ENCODE measurements at regions of chr19 and their contacts with region 1.

Region 1: DNA sequence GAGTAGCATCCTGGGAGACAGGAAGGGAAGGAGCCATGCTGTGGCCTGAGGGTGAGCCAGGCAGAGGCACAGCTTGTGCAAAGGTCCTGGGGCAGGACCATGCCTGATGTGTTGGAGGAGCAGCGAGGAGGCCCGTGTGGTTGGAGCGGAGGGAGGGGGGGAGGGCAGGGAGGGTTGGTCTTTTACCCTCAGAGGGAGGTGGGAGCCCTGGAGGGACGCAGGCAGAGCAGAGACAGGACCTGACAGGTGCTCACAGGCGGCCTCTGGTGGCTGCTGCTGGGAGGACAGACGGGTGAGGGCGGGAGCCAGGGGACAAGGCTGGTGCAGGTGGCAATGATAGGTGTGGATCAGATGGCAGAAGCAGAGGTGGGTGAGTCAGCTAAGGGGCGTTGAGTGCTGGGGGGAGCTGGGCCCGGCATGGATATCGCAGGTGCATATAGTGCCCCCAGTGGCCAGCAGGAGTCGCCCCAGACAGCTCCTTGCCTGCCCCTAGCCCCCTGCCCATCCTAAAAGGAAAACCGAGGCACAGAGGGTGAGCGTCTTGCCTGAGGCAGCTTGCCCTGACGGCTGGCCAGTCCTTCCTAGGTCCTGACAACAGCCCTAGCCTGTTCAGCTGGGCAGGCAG is 9.8 kb upstream of the GNA15 start:
- DNase-seq: peak; percentile 85 to 87
- H3K4me3 ChIP-seq: no peak overlapping the region
- H3K27ac ChIP-seq: no peak overlapping the region
- H3K4me1 ChIP-seq: no peaks in the 10 kb centered on the region
- H3K27me3 ChIP-seq: no peaks in the 10 kb centered on the region
- CTCF ChIP-seq: peak; percentile 61 to 96 (median 73)
- EP300 ChIP-seq: no peak
- POLR2A ChIP-seq: no peak
- RAD21 ChIP-seq: peak; percentile 52 to 55

Region 2: DNA sequence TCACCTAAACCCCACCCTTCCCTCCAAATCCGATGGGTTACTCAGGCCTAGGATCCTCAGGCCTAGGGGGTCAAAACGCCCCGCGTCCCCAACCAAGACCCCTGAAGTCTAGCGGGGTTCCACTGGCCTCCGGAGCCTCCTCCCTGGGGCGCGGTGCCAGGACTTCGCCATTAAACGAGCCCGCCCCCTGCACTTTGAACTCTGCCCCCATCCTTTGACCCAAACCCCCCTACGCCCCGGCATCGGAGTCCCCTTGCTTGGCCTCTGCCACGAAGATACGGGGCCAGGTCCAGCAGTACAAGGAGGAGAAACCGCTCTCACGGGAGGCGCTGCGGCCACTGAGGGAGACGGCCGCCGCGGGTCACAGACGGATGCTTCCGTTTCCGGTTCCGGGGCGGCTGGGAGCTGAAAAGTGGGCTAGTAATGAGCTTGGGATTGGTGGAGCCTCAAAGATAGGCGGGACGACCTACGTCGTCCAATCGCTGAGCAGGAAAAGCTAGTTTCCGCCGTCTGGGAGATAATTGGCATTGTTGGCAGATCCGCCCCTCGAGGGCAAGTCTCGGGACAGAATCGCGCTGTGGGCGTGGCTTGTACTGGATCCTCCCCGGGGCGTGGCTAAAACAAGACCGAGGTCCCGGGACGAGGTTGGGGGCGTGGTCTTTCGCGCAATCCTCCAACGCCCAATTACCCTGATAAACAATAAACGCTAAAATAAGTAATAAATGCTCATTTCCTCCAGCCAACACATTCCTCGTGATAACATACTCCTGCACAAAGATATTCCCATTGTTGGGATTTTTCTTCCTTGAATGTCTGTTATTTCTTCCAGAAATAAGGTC is 175.5 kb before region 1 on chr19:
- CTCF ChIA-PET with region 1: interaction called, 15 read pairs
- POLR2A ChIA-PET with region 1: no interaction called
- DNase-seq: peak; percentile 99 to 100
- H3K4me3 ChIP-seq: peak overlapping the region; percentile 73 to 98 (median 90)
- H3K27ac ChIP-seq: peak overlapping the region; percentile 74
- H3K4me1 ChIP-seq: peaks cover 0 to 6% (median 4%) of the 10 kb centered on the region in 4 experiments; a peak in 4 of 7 replicates
- H3K27me3 ChIP-seq: no peaks in the 10 kb centered on the region
- CTCF ChIP-seq: peak in 1 of 3 experiments; percentile 11; a peak in 1 of 4 replicates
- EP300 ChIP-seq: no peak
- POLR2A ChIP-seq: peak; percentile 87 to 96
- RAD21 ChIP-seq: no peak

Region 3: DNA sequence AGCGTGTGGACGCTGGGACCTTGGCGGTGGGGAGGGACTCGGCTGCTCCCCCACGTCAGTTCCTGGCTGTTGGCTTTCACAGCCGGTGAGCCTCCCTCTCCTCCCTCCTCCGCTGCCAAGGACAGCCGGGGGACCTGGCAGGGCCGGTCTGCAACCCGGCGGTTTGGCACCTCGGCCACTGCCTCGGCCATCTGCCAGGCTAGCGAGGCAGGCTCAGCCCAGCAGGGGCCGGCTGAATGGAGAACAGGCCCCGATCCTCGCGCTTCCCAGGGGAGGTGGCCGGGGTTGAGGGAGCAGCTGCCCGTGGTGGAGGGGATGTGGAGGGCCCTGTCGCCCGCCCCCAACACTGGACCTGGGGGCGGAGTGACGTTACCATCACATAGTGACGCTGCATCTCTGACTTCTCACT is 68.7 kb before region 1 on chr19:
- CTCF ChIA-PET with region 1: interaction called, 10 read pairs
- POLR2A ChIA-PET with region 1: interaction called, 3 read pairs
- DNase-seq: peak in 1 of 2 experiments; percentile 64
- H3K4me3 ChIP-seq: peak overlapping the region in 1 of 4 experiments; percentile 22; a peak in 2 of 8 replicates
- H3K27ac ChIP-seq: no peak overlapping the region
- H3K4me1 ChIP-seq: peaks cover 3 to 36% (median 27%) of the 10 kb centered on the region in 4 experiments
- H3K27me3 ChIP-seq: no peaks in the 10 kb centered on the region; a peak in 1 of 7 replicates
- CTCF ChIP-seq: no peak
- EP300 ChIP-seq: peak in 1 of 2 experiments; percentile 98; a peak in 1 of 3 replicates
- POLR2A ChIP-seq: no peak
- RAD21 ChIP-seq: no peak

Region 4: DNA sequence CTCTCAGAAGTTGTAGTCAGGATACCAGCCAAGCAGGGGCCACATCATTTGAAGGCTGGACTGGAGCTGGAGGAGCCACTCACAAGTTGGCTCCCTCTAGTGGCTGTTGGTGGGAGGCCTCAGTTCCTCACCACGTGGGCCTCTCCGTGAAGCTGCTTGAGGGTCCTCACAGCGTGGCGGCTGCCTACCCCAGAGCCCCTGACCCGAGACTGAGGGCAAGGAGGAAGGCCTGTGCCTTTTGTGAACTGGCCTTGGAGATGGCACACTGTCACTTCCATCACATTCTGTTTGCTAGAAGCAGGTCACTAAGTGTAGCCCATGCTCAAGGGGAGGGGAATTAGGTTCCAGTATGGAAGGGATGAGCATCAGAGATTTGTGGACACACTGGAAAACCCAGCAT is 17.2 kb before region 1 on chr19:
- CTCF ChIA-PET with region 1: interaction called, 40 read pairs
- POLR2A ChIA-PET with region 1: no interaction called
- DNase-seq: peak; percentile 61 to 86
- H3K4me3 ChIP-seq: no peak overlapping the region
- H3K27ac ChIP-seq: no peak overlapping the region
- H3K4me1 ChIP-seq: peaks cover 0 to 5% (median 2%) of the 10 kb centered on the region in 4 experiments; a peak in 5 of 7 replicates
- H3K27me3 ChIP-seq: peaks cover 0 to 2% (median 0%) of the 10 kb centered on the region in 4 experiments; a peak in 1 of 7 replicates
- CTCF ChIP-seq: peak; percentile 74 to 97 (median 92)
- EP300 ChIP-seq: no peak
- POLR2A ChIP-seq: no peak
- RAD21 ChIP-seq: peak; percentile 49 to 59

Region 5: DNA sequence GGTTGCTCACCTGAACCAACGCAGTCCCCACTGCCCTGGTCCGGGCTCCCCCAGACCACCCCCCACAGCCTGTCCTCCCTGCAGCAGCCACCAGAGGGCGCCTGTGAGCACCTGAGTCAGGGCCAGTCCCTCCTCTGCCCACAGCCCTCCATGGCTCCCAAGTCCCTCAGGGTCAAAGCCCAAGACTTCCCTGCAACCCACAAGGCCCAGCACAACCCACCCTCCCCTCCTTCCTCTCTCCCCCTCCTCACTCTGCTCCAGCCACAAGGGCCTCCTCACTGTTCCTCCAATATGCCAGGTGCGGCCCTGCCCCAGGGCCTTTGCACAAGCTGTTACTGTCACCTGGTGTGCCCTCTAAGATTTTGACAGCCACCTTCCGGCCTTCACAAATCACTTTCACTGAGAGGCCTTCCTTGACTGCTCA is 20.7 kb after region 1 on chr19:
- CTCF ChIA-PET with region 1: interaction called, 166 read pairs
- POLR2A ChIA-PET with region 1: no interaction called
- DNase-seq: peak in 1 of 2 experiments; percentile 96
- H3K4me3 ChIP-seq: no peak overlapping the region
- H3K27ac ChIP-seq: no peak overlapping the region
- H3K4me1 ChIP-seq: peaks cover 0 to 5% (median 2%) of the 10 kb centered on the region in 4 experiments; a peak in 1 of 7 replicates
- H3K27me3 ChIP-seq: no peaks in the 10 kb centered on the region; a peak in 1 of 7 replicates
- CTCF ChIP-seq: peak; percentile 81 to 95 (median 90)
- EP300 ChIP-seq: no peak
- POLR2A ChIP-seq: no peak
- RAD21 ChIP-seq: peak; percentile 34 to 48; a peak in 2 of 4 replicates

Region 6: DNA sequence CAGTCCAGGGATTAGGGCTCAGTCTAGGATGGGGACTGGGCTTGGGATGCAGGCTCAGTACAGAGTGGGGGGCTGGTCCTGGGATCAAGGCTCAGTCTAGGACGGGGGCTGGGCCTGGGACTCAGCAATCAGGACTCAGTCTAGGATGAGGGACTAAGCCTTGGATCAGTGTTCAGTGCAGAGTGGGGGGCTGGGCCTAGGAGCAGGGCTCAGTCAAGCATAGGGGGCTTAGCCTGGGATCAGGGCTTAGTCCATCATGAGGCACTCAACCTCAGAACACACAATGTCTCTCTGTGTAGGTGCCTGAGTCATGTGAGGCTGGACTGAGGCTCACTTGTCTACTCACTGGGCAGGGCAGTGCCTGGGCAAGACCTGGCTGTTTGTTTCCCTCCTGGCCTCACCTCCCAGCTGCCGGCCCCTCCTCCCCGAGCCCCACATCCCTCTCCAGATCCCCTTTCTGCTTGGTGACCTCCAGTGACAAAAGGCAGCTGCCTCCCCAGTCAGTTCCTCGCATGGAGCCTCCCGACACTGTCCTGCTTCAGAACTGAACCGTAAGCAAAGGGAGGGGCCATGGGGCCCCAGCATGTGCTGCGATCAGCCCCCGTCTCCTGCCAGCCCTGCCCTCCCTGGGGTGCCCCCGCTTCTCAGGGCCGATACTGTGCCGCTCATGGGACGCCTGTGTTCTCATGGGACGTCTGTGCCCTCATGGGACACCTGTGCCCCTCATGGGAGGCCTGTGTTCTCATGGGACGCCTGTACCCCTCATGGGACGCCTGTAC is 46.1 kb after region 1 on chr19:
- CTCF ChIA-PET with region 1: interaction called, 162 read pairs
- POLR2A ChIA-PET with region 1: no interaction called
- DNase-seq: no peak
- H3K4me3 ChIP-seq: no peak overlapping the region
- H3K27ac ChIP-seq: no peak overlapping the region
- H3K4me1 ChIP-seq: no peaks in the 10 kb centered on the region
- H3K27me3 ChIP-seq: 0 out of 7 replicates have a peak, but pooled peaks cover 0 to 2% (median 0%) of the 10 kb centered on the region in 4 experiments
- CTCF ChIP-seq: no peak
- EP300 ChIP-seq: no peak
- POLR2A ChIP-seq: no peak
- RAD21 ChIP-seq: no peak

Region 7: GRCh38 chr19:3216874-3217273 is 90.9 kb after region 1 on chr19:
- CTCF ChIA-PET with region 1: no interaction called
- POLR2A ChIA-PET with region 1: no interaction called
- DNase-seq: no peak
- H3K4me3 ChIP-seq: no peak overlapping the region
- H3K27ac ChIP-seq: no peak overlapping the region
- H3K4me1 ChIP-seq: no peaks in the 10 kb centered on the region
- H3K27me3 ChIP-seq: 0 out of 7 replicates have a peak, but pooled peaks cover 0 to 3% (median 0%) of the 10 kb centered on the region in 4 experiments
- CTCF ChIP-seq: no peak
- EP300 ChIP-seq: no peak
- POLR2A ChIP-seq: no peak
- RAD21 ChIP-seq: no peak